ENCODE measurements at regions of chr16 and their contacts with region 1.

Region 1: DNA sequence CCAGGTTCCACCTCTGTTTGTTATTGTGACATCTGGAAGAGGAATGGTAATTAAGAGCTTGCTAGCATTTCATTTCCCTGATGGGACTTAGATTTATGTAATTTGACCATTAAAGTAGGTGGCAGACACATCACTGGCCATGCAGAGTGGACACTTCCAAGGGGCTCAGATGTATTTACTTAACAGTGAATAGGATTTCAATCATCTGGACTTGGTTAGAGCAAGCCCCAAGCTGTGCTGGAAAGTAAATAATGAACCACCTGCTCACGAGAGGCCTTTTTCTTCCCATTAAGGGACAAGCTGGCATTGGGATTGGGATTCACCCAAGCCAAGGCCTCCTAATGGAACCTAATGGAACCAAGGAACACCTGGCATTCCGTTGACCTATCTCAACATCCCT is 395.3 kb downstream of the HS3ST4 start:
- DNase-seq: no peak
- ATAC-seq: no peak
- H3K4me3 ChIP-seq: no peak overlapping the region
- H3K27ac ChIP-seq: no peak overlapping the region
- H3K4me1 ChIP-seq: no peaks in the 10 kb centered on the region
- H3K27me3 ChIP-seq: peaks cover 0 to 4% (median 0%) of the 10 kb centered on the region in 9 donors
- CTCF ChIP-seq: no peak
- POLR2A ChIP-seq: no peak

Region 2: GRCh38 chr16:26019381-26020242 is 67.5 kb before region 1 on chr16:
- intact Hi-C with region 1: loop called in 1 of 10 experiments (anchors 10 kb)
- DNase-seq: no peak
- ATAC-seq: no peak
- H3K4me3 ChIP-seq: no peak overlapping the region
- H3K27ac ChIP-seq: no peak overlapping the region
- H3K4me1 ChIP-seq: no peaks in the 10 kb centered on the region
- H3K27me3 ChIP-seq: peaks cover 0 to 4% (median 0%) of the 10 kb centered on the region in 9 donors
- CTCF ChIP-seq: no peak
- POLR2A ChIP-seq: no peak

Region 3: GRCh38 chr16:26149364-26150190 is 62.5 kb after region 1 on chr16:
- intact Hi-C with region 1: loop called in 1 of 10 experiments (anchors 10 kb)
- DNase-seq: no peak
- ATAC-seq: no peak
- H3K4me3 ChIP-seq: no peak overlapping the region
- H3K27ac ChIP-seq: no peak overlapping the region
- H3K4me1 ChIP-seq: no peaks in the 10 kb centered on the region
- H3K27me3 ChIP-seq: no peaks in the 10 kb centered on the region
- CTCF ChIP-seq: no peak
- POLR2A ChIP-seq: no peak